T-cell (primary cell): ENCODE measurements at regions of chr10 and their contacts with region 1.

Region 1: DNA sequence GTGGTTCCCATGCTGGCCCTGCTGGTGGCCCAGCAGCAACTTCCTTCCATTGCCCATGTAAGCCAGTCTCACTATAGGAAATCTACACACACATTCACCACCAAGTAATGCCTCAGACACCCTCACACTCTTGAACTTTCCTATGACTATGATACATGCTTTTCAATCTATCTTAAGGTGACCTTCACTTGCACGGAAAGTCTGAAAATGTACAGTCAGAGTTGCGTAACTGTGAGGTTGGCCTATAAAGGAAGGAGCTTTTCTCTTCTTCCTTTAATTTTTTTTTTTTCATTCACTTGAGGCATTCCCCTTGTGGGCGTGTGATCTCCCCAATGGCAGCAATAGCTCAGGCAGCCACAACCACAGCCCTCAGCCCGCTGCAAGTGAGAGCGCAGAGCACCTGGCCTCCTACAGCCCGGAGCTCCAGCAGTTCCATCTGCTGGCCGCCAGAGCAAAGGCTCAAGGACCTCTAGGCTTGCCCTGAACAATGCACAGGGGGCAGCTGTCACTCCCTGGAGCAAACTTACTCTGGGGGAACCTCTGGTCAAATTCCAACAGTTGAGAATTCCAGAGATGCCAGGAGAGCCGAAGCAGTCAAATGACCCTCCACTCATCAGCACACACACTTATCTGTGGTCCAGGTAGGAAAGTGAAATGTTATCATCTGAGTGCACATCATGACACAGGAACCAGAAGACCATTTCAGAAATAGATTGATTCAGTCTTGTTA is 123.1 kb upstream of the ADO start:
- DNase-seq: peak in 34 of 35 experiments; percentile 34 to 88 (median 58)
- ATAC-seq: peak; percentile 83 to 96 (median 84)
- H3K4me3 ChIP-seq: no peak overlapping the region
- H3K4me3 Mint-ChIP-seq: peak overlapping the region in 1 of 3 donors; percentile 2
- H3K27ac ChIP-seq: peak overlapping the region; percentile 35
- H3K27ac Mint-ChIP-seq: peak overlapping the region in 1 of 2 donors; percentile 4
- H3K4me1 ChIP-seq: peaks cover 0 to 16% of the 10 kb centered on the region in 2 experiments
- H3K4me1 Mint-ChIP-seq: peaks cover 15 to 24% (median 18%) of the 10 kb centered on the region in 3 donors
- H3K27me3 ChIP-seq: no peaks in the 10 kb centered on the region
- H3K27me3 Mint-ChIP-seq: peaks cover 4% of the 10 kb centered on the region in 2 donors

Region 2: GRCh38 chr10:62610649-62611229 is 70.6 kb before region 1 on chr10:
- CTCF ChIA-PET with region 1: interaction called in 1 of 2 experiments, 11 read pairs
- POLR2A ChIA-PET with region 1: no interaction called
- DNase-seq: peak; percentile 39 to 83 (median 64)
- ATAC-seq: peak; percentile 84 to 94 (median 86)
- H3K4me3 ChIP-seq: no peak overlapping the region
- H3K4me3 Mint-ChIP-seq: no peak overlapping the region
- H3K27ac ChIP-seq: no peak overlapping the region
- H3K27ac Mint-ChIP-seq: no peak overlapping the region
- H3K4me1 ChIP-seq: peaks cover 0 to 6% of the 10 kb centered on the region in 2 experiments
- H3K4me1 Mint-ChIP-seq: peaks cover 0 to 6% (median 4%) of the 10 kb centered on the region in 3 donors
- H3K27me3 ChIP-seq: no peaks in the 10 kb centered on the region
- H3K27me3 Mint-ChIP-seq: peaks cover 8 to 10% of the 10 kb centered on the region in 2 donors

Region 3: GRCh38 chr10:62732841-62733653 is 51.7 kb after region 1 on chr10:
- CTCF ChIA-PET with region 1: interaction called, 4 to 12 read pairs
- POLR2A ChIA-PET with region 1: interaction called in 1 of 2 experiments, 4 read pairs
- DNase-seq: peak; percentile 4 to 86 (median 47)
- ATAC-seq: peak; percentile 92 to 93 (median 93)
- H3K4me3 ChIP-seq: peak overlapping the region in 1 of 2 donors; percentile 5
- H3K4me3 Mint-ChIP-seq: peak overlapping the region in 1 of 3 donors; percentile 49
- H3K27ac ChIP-seq: peak overlapping the region; percentile 75
- H3K27ac Mint-ChIP-seq: no peak overlapping the region
- H3K4me1 ChIP-seq: peaks cover 27 to 34% of the 10 kb centered on the region in 2 experiments
- H3K4me1 Mint-ChIP-seq: peaks cover 0 to 20% (median 14%) of the 10 kb centered on the region in 3 donors
- H3K27me3 ChIP-seq: no peaks in the 10 kb centered on the region
- H3K27me3 Mint-ChIP-seq: no peaks in the 10 kb centered on the region

Region 4: GRCh38 chr10:62779487-62780248 is 98.3 kb after region 1 on chr10:
- CTCF ChIA-PET with region 1: interaction called in 1 of 2 experiments, 11 read pairs
- POLR2A ChIA-PET with region 1: no interaction called
- DNase-seq: peak; percentile 48 to 95 (median 85)
- ATAC-seq: peak; percentile 96 to 99 (median 98)
- H3K4me3 ChIP-seq: no peak overlapping the region
- H3K4me3 Mint-ChIP-seq: peak overlapping the region in 1 of 3 donors; percentile 50
- H3K27ac ChIP-seq: peak overlapping the region; percentile 44
- H3K27ac Mint-ChIP-seq: peak overlapping the region; percentile 37 to 59
- H3K4me1 ChIP-seq: peaks cover 12 to 16% of the 10 kb centered on the region in 2 experiments
- H3K4me1 Mint-ChIP-seq: peaks cover 16 to 23% (median 17%) of the 10 kb centered on the region in 3 donors
- H3K27me3 ChIP-seq: no peaks in the 10 kb centered on the region
- H3K27me3 Mint-ChIP-seq: peaks cover 0 to 5% of the 10 kb centered on the region in 2 donors